Posterior vena cava (tissue), 2 donors: ENCODE measurements at regions of chr2 and their contacts with region 1.

Region 1: GRCh38 chr2:200219309-200220113 is 87.0 kb upstream of the SPATS2L start:
- DNase-seq: no peak

Region 2: GRCh38 chr2:199646439-199646838 is 573.1 kb before region 1 on chr2:
- intact Hi-C with region 1: no loop called
- DNase-seq: no peak

Region 3: GRCh38 chr2:200185628-200186000 is 33.9 kb before region 1 on chr2:
- intact Hi-C with region 1: loop called in 1 of 2 experiments (anchors 2 kb)
- DNase-seq: no peak